Right ventricle myocardium inferior (tissue), 1 donor: ENCODE measurements at regions of chr16 and their contacts with region 1.

Region 1: DNA sequence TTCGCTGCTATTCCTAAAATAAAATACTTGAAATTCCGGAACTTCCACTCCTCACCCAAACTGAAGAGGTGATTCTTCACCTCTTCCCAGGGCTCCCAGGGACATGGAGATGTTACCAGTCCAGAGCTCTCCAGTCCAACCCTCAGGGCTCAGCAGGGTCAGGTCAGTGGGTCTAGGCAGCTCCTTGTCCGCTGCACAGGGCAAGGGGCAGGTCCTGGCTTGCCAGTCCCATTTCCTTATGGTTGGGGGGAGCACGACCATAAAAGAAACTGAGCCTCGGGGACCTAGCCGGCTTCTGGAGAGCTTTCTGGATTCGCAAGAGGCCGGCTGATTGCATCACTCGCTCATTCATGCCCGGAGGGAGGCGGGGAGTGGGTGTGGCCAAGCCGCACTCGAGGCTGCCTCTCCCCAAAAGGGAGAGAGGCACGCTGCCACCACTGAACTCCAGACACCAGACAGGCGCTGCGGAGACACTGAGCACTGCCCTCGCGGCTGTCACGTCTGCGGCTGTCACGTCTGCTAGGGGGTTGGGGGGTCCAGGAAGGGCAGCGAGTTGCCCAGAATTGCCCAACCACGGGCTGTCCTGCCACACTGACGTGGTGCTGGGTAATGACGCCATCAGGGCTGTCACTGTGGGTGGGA is 15.8 kb downstream of the SLC7A5 start:
- DNase-seq: peak; percentile 96
- ATAC-seq: peak; percentile 90

Region 2: GRCh38 chr16:87713451-87714229 is 139.9 kb before region 1 on chr16:
- intact Hi-C with region 1: no loop called
- DNase-seq: no peak
- ATAC-seq: no peak

Region 3: GRCh38 chr16:87765473-87765775 is 88.1 kb before region 1 on chr16:
- intact Hi-C with region 1: no loop called
- DNase-seq: no peak
- ATAC-seq: peak; percentile 32

Region 4: GRCh38 chr16:87778830-87779579 is 74.5 kb before region 1 on chr16:
- intact Hi-C with region 1: loop called (anchors 5 kb)
- DNase-seq: peak; percentile 96
- ATAC-seq: peak; percentile 94

Region 5: GRCh38 chr16:87790278-87791032 is 63.1 kb before region 1 on chr16:
- intact Hi-C with region 1: no loop called
- DNase-seq: peak; percentile 68
- ATAC-seq: peak; percentile 89